Endothelial cell of umbilical vein (primary cell): ENCODE measurements at regions of chr15 and their contacts with region 1.

Region 1: DNA sequence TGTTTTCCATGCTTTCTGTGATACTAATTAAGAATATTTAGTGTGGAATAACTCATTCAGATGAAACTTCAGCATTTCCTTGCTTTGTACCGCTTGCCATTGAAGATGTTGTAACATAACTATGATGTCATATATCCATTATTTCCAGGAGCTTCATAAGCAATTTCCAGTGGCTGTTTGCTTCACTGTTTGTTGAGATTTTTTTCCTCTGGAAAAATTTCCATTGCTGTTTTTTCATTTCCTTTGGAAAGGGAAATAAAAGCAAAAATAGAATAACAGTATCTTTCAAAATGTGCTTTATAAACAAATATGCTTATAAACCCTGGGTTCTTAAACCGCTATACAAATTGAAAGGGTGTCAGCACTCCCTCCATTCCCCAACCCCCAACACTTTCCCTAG is 319.6 kb upstream of the SEMA6D start:
- DNase-seq: peak; percentile 41
- H3K4me3 ChIP-seq: no peak overlapping the region
- H3K27ac ChIP-seq: no peak overlapping the region
- H3K4me1 ChIP-seq: peaks cover 13% of the 10 kb centered on the region
- H3K27me3 ChIP-seq: no peaks in the 10 kb centered on the region
- CTCF ChIP-seq: no peak
- POLR2A ChIP-seq: no peak

Region 2: DNA sequence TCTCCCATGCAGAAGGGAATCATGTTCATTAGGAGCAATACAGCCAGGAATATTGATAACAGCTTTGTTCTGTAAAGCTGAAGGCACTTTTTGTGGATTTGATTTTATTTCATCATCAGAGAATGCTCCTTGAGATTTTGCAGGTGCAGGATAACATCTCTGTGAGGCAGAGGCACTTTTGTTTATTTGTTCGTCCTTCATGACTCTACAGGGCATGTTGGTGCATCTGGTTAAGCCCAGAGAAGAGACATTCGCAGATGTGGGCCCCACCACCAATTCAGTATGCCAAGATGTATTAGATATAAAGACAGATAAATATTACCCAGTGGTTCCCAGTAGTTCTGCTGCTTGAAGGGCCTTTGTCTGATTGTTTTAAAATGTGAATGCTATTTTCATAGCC is 48.5 kb before region 1 on chr15:
- CTCF ChIA-PET with region 1: no interaction called
- POLR2A ChIA-PET with region 1: no interaction called
- dilution Hi-C with region 1: no loop called
- intact Hi-C with region 1: loop called (anchors 1 kb)
- DNase-seq: no peak
- H3K4me3 ChIP-seq: no peak overlapping the region
- H3K27ac ChIP-seq: no peak overlapping the region
- H3K4me1 ChIP-seq: peaks cover 14% of the 10 kb centered on the region
- H3K27me3 ChIP-seq: no peaks in the 10 kb centered on the region
- CTCF ChIP-seq: no peak
- POLR2A ChIP-seq: no peak